Caco-2 (cell line): ENCODE measurements at regions of chr6 and their contacts with region 1.

Region 1: DNA sequence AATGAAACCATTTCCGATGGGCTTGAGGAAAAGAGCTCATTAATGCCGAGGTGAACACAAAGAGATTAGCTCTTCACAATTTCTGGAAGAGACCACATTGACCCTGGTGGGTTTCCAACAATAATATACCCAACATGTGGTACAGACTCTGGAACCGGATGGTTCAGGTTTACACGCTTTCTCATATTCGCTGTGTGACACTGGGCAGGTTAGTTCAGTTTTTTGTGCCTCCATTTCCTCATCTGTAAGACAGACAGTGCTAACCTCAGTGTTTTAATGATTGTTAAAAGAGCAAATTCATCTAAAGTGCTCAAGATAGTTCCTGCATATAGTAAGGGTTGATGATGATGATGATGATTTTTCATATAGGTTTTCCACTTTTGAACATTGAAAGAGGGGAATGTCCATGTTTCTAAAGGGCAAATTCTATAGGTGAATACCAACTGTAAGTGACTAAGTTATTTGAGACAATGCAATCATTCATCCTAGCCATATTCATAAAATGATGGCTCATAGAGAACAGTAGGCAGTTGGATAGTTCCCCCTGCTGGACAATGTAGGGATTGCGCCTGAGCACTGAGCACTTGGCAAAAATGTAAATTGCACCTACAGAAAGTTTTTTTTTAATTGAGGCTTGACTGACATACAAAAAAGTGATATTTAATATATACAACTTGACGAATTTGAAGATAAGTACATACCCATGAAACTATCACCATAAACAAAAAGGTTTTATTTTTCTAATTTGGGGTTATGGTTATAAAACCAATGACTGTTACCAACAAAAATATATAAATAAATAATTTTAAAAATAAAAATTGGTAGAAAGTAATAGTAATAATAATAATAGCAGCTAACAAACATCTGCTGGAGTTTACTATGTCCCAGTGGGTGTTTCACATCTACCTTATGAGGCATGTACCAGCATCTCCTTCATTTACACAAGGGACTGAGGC is 2.1 kb upstream of the PERP start:
- DNase-seq: peak; percentile 55 to 74
- H3K4me3 ChIP-seq: no peak overlapping the region
- H3K4me3 Mint-ChIP-seq: peak overlapping the region; percentile 55
- H3K27ac Mint-ChIP-seq: peak overlapping the region; percentile 33
- H3K4me1 ChIP-seq: peaks cover 8% of the 10 kb centered on the region
- H3K4me1 Mint-ChIP-seq: peaks cover 6% of the 10 kb centered on the region
- H3K27me3 ChIP-seq: no peaks in the 10 kb centered on the region
- H3K27me3 Mint-ChIP-seq: no peaks in the 10 kb centered on the region
- CTCF ChIP-seq: peak; percentile 72 to 84

Region 2: DNA sequence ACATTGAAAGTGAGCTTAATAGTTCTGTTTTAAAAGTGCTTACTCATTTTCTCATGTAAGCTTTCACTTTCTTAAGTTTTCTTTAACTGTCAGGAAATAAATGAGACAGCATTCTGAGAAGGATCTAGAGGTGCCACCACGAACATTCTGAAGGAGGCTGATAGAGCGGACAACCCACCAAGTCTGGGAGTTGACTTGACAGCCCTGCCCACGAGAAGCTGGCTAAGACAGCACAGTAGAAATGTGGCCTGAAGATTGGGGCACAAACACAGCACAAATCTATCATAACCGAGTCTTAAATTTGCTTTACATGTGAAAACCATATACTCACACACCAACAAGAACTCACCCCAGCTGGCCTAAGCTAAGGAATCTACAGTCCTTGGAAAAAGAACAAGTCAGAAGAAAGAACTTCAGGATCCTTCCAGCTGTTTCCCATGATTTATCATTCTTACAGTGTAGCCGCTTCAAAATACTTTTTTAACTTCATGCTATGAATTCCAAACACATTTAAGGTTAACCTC is 386.5 kb before region 1 on chr6:
- CTCF ChIA-PET with region 1: no interaction called
- POLR2A ChIA-PET with region 1: no interaction called
- intact Hi-C with region 1: loop called (anchors 5 kb)
- DNase-seq: no peak
- H3K4me3 ChIP-seq: no peak overlapping the region
- H3K4me3 Mint-ChIP-seq: peak overlapping the region; percentile 36
- H3K27ac Mint-ChIP-seq: peak overlapping the region; percentile 86
- H3K4me1 ChIP-seq: peaks cover 41% of the 10 kb centered on the region
- H3K4me1 Mint-ChIP-seq: peaks cover 32% of the 10 kb centered on the region
- H3K27me3 ChIP-seq: no peaks in the 10 kb centered on the region
- H3K27me3 Mint-ChIP-seq: no peaks in the 10 kb centered on the region
- CTCF ChIP-seq: no peak